BJ (cell line): ENCODE measurements at regions of chr5 and their contacts with region 1.

Region 1: GRCh38 chr5:78886341-78887230 is 98.5 kb downstream of the ARSB start:
- DNase-seq: no peak
- H3K4me3 ChIP-seq: no peak overlapping the region
- H3K27me3 ChIP-seq: no peaks in the 10 kb centered on the region
- CTCF ChIP-seq: peak; percentile 61

Region 2: GRCh38 chr5:78562714-78563330 is 323.8 kb before region 1 on chr5:
- CTCF ChIA-PET with region 1: no interaction called
- POLR2A ChIA-PET with region 1: no interaction called
- DNase-seq: no peak
- H3K4me3 ChIP-seq: no peak overlapping the region
- H3K27me3 ChIP-seq: no peaks in the 10 kb centered on the region
- CTCF ChIP-seq: no peak

Region 3: GRCh38 chr5:78899922-78900362 is 13.4 kb after region 1 on chr5:
- CTCF ChIA-PET with region 1: interaction called, 44 read pairs
- POLR2A ChIA-PET with region 1: no interaction called
- DNase-seq: no peak
- H3K4me3 ChIP-seq: no peak overlapping the region
- H3K27me3 ChIP-seq: no peaks in the 10 kb centered on the region
- CTCF ChIP-seq: peak; percentile 81